Gastrocnemius medialis (tissue), 4 donors: ENCODE measurements at regions of chr17 and their contacts with region 1.

Region 1: GRCh38 chr17:16537130-16537458 is 31.9 kb downstream of the ZNF287 start:
- DNase-seq: no peak
- ATAC-seq: no peak
- H3K4me3 ChIP-seq: peak overlapping the region in 1 of 4 donors; percentile 79
- H3K27ac ChIP-seq: peak overlapping the region in 1 of 4 donors; percentile 91
- H3K4me1 ChIP-seq: no peaks in the 10 kb centered on the region
- H3K27me3 ChIP-seq: no peaks in the 10 kb centered on the region
- CTCF ChIP-seq: peak in 1 of 5 experiments; percentile 1
- POLR2A ChIP-seq: no peak

Region 2: DNA sequence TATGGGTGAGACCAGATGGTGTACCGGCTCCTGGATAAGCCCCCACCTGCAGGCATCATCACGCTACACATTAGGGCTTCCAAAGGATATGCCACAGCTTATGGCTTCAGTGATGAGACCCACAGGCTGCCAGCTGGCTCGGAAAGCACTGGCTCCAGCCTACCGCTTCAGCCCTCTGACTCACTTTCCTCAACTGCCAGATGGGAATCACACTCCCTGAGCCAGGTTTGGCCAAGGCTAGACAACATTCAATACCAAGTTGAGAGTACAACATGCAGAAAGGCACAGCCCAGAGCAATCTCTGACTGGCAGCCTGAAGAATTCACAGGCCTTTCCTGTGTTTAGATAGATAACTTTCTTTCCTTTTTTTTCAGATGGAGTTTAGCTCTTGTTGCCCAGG is 194.1 kb before region 1 on chr17:
- in situ Hi-C with region 1: no loop called
- intact Hi-C with region 1: no loop called
- DNase-seq: peak; percentile 69 to 79
- ATAC-seq: peak; percentile 98
- H3K4me3 ChIP-seq: no peak overlapping the region
- H3K27ac ChIP-seq: peak overlapping the region; percentile 21 to 74 (median 56)
- H3K4me1 ChIP-seq: peaks cover 0 to 3% of the 10 kb centered on the region in 2 donors
- H3K27me3 ChIP-seq: no peaks in the 10 kb centered on the region
- CTCF ChIP-seq: no peak
- POLR2A ChIP-seq: no peak

Region 3: GRCh38 chr17:16480995-16481394 is 56.1 kb before region 1 on chr17:
- in situ Hi-C with region 1: no loop called
- intact Hi-C with region 1: no loop called
- DNase-seq: no peak
- ATAC-seq: no peak
- H3K4me3 ChIP-seq: no peak overlapping the region
- H3K27ac ChIP-seq: no peak overlapping the region
- H3K4me1 ChIP-seq: peaks cover 4% of the 10 kb centered on the region in 2 donors
- H3K27me3 ChIP-seq: no peaks in the 10 kb centered on the region
- CTCF ChIP-seq: no peak
- POLR2A ChIP-seq: no peak

Region 4: GRCh38 chr17:16491703-16492612 is 45.1 kb before region 1 on chr17 and contains the start of gene LRRC75A:
- in situ Hi-C with region 1: no loop called
- intact Hi-C with region 1: loop called (anchors 2 kb)
- DNase-seq: no peak
- ATAC-seq: peak; percentile 83 to 84
- H3K4me3 ChIP-seq: peak within 1 kb of the TSS; percentile 49 to 67 (median 62)
- H3K27ac ChIP-seq: no peak within 1 kb of the TSS
- H3K4me1 ChIP-seq: peaks cover 11 to 24% of the 10 kb centered on the region in 2 donors
- H3K27me3 ChIP-seq: peaks cover 0 to 4% (median 0%) of the 10 kb centered on the region in 3 donors
- CTCF ChIP-seq: no peak
- POLR2A ChIP-seq: no peak
- total RNA-seq, gene LRRC75A: 0.34 to 0.80 TPM in 2 of 4 donors, not detected in the others

Region 5: DNA sequence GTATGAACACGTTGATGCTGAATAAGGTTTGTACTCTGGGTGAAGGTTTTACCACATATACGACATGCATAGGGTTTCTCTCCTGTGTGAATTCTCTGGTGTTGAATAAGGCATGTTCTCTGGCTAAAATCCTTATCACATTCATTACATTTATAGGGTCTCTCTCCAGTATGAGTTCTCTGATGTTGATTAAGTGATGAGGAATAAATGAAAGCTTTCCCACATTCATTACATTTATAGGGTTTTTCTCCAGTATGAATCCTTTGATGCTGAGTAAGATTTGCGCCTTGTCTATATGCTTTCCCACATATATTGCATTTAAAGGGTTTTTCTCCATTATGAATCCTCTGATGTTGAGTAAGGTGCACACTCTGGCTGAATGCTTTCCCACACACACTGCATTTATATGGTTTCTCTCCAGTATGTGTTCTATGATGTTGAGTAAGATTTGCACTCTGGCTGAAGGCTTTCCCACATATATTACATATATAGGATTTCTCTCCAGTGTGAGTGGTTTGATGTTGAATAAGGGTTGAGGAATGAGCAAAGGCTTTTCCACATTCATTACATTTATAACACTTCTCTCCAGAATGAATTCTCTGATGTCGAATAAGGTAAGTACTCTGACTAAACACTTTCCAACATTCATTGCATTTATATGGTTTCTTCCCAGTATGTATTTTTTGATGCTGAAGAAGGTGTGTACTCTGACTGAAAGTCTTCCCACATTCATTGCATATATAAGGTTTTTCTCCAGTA is 15.0 kb after region 1 on chr17:
- in situ Hi-C with region 1: no loop called
- intact Hi-C with region 1: no loop called
- DNase-seq: no peak
- ATAC-seq: no peak
- H3K4me3 ChIP-seq: no peak overlapping the region
- H3K27ac ChIP-seq: no peak overlapping the region
- H3K4me1 ChIP-seq: no peaks in the 10 kb centered on the region
- H3K27me3 ChIP-seq: no peaks in the 10 kb centered on the region
- CTCF ChIP-seq: no peak
- POLR2A ChIP-seq: no peak

Region 6: GRCh38 chr17:16589097-16589969 is 52.2 kb after region 1 on chr17:
- in situ Hi-C with region 1: loop called in 1 of 4 experiments (anchors 10 kb)
- intact Hi-C with region 1: loop called (anchors 1 kb)
- DNase-seq: peak; percentile 79 to 84
- ATAC-seq: peak; percentile 90 to 92
- H3K4me3 ChIP-seq: peak overlapping the region; percentile 64 to 79 (median 68)
- H3K27ac ChIP-seq: peak overlapping the region; percentile 35 to 62 (median 55)
- H3K4me1 ChIP-seq: peaks cover 4 to 8% of the 10 kb centered on the region in 2 donors
- H3K27me3 ChIP-seq: peaks cover 0 to 3% (median 0%) of the 10 kb centered on the region in 3 donors
- CTCF ChIP-seq: peak; percentile 91 to 100 (median 92)
- POLR2A ChIP-seq: no peak

Region 7: DNA sequence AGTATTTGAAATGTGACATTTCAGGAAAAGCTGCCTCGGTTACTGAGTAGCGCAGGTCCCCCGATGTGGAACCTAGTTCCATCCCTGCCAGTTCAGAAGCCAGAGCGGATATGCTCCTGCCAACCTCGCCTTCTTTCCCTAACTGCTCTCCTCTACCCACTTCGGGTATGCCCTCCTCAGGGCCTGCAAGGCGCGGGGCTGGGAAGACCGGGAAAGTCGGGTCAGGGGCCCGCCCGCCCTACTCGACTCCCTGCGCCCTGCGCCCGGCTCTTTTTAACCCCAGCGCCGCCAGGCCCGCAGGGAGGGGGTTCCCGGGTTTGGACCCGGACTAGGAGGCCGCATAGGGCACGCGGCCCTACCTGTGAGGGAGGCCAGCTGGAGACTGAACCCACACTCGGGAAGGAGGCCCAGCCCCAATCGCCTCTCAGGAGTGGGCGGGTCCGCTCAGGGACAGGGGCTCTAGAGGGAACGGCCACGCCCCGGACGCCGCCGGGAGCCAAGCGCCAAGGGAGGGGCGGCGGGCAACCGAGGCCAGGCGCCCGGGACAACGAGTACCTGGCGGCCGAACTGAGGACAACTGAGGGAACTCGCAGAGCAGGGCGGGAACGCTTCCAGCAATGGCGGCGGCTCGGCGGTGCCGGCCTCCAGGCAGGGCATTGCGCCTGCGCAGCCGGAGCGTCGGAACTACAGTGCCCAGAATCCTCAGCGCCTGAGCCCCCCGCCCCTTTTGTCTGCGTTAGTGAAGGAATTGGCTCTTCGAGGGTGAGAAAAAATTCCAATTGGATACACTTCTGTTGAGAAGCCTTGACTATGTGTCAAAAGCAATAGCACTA is 116.3 kb after region 1 on chr17 and contains the start of gene ZNF624:
- in situ Hi-C with region 1: no loop called
- intact Hi-C with region 1: loop called (anchors 2 kb)
- DNase-seq: peak; percentile 94 to 99
- ATAC-seq: peak; percentile 94
- H3K4me3 ChIP-seq: peak within 1 kb of the TSS; percentile 66 to 93 (median 82)
- H3K27ac ChIP-seq: peak within 1 kb of the TSS; percentile 93 to 99 (median 96)
- H3K4me1 ChIP-seq: peaks cover 0 to 4% of the 10 kb centered on the region in 2 donors
- H3K27me3 ChIP-seq: no peaks in the 10 kb centered on the region
- CTCF ChIP-seq: no peak
- POLR2A ChIP-seq: peak; percentile 78 to 88
- total RNA-seq, gene ZNF624: 0.86 to 2.2 (median 0.94) TPM